Mammary epithelial cell (primary cell): ENCODE measurements at regions of chr1 and their contacts with region 1.

Region 1: DNA sequence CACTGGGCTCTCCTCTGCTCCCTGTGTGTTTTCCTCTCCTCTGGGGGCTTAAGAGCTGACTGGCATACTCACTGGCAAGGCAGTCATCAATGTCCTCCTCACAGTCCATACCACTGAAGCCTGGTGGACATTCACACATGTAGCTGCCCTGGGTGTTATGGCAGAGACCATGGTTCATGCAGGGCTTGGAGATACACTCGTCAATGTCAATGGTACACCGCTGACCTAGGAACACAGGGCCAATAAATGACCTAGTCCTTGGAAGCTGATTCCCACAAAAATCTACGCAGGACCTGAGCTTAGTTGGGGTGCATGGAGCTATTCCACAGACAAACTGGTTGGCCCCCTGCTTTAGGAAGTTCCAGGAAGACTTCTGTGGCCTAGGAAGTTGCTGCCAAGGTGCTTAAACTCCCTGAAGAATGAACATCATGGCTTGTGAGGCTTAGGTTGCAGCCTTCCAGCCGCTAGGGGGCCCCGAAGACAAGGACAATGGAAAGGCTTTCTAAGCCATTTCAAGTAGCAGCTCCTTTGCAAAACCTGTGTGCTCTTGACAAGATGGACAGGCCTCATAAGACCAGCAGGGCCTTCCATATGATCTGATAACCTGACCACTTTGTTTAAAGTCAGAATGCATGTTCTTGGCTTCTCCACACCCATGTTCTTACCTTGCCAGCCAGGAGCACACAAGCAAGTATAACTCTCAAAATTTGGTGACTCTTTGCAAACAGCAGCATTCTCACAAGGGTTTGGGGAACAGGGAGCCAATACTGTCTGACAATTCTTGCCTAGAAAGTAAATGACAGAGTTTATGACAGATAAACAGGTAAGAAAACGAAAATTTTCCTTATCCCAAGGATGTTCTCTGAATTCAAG is 52.3 kb upstream of the ADAM30 start:
- DNase-seq: peak; percentile 64
- H3K4me3 ChIP-seq: no peak overlapping the region
- H3K27ac ChIP-seq: no peak overlapping the region
- H3K4me1 ChIP-seq: peaks cover 8% of the 10 kb centered on the region
- H3K27me3 ChIP-seq: no peaks in the 10 kb centered on the region
- CTCF ChIP-seq: peak; percentile 90 to 93

Region 2: DNA sequence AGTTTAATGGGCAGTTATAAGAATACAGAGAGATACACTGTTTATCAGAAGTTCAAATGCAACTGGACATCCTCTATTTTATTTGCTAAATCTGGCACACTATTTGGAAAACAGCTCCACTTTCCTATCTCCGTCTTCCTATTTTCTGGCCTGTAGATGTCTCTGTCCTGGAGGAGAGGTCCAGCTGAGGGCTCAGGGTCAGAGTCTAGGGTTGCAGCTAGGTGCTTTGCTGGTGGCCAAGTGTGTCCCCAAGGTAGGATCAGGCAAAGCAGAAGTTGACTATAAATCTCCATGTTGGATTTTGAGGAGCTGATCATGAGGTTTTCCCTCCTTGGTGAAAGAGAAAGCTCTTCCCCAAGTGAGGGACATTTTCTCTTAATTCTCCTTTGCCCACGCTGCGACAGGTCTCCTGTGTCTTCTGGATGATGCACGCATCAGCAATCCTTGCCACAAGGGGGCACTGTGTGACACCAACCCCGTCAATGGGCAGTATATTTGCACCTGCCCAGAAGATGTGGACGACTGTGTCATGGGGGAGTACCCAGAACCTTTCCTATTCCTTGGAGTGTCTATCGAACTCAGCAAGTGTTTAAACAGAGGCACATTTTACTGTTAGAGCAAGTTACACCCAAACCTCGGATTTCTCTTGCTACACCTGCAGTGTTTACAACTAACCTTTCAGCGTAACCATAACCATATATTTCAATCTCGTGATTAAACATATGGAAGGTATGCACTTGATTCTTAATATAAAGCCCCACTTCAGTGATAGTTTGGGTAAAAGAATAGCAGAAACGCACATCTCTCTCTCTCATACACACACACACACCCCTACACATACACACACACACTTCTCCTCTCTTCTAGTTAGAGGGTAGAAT is 62.4 kb before region 1 on chr1:
- CTCF ChIA-PET with region 1: no interaction called
- dilution Hi-C with region 1: no loop called
- in situ Hi-C with region 1: no loop called
- intact Hi-C with region 1: loop called (anchors 5 kb)
- DNase-seq: no peak
- H3K4me3 ChIP-seq: no peak overlapping the region
- H3K27ac ChIP-seq: no peak overlapping the region
- H3K4me1 ChIP-seq: no peaks in the 10 kb centered on the region
- H3K27me3 ChIP-seq: no peaks in the 10 kb centered on the region
- CTCF ChIP-seq: peak; percentile 85 to 89

Region 3: GRCh38 chr1:119968068-119968492 is 19.5 kb after region 1 on chr1:
- CTCF ChIA-PET with region 1: no interaction called
- dilution Hi-C with region 1: no loop called
- in situ Hi-C with region 1: no loop called
- intact Hi-C with region 1: loop called (anchors 2 kb)
- DNase-seq: peak; percentile 65
- H3K4me3 ChIP-seq: no peak overlapping the region
- H3K27ac ChIP-seq: peak overlapping the region; percentile 35
- H3K4me1 ChIP-seq: peaks cover 6% of the 10 kb centered on the region
- H3K27me3 ChIP-seq: no peaks in the 10 kb centered on the region
- CTCF ChIP-seq: peak; percentile 72 to 83